Activated CD4-positive, alpha-beta T cell treated with anti-CD3 and anti-CD28 coated beads for 36 hours (primary cell): ENCODE measurements at regions of chr1 and their contacts with region 1.

Region 1: GRCh38 chr1:198657550-198658064 is 18.8 kb downstream of the PTPRC start:
- DNase-seq: peak; percentile 55
- ATAC-seq: peak; percentile 48
- H3K4me3 Mint-ChIP-seq: peak overlapping the region; percentile 76
- H3K27ac Mint-ChIP-seq: peak overlapping the region; percentile 94
- H3K4me1 Mint-ChIP-seq: peaks cover 64% of the 10 kb centered on the region
- H3K27me3 Mint-ChIP-seq: no peaks in the 10 kb centered on the region

Region 2: DNA sequence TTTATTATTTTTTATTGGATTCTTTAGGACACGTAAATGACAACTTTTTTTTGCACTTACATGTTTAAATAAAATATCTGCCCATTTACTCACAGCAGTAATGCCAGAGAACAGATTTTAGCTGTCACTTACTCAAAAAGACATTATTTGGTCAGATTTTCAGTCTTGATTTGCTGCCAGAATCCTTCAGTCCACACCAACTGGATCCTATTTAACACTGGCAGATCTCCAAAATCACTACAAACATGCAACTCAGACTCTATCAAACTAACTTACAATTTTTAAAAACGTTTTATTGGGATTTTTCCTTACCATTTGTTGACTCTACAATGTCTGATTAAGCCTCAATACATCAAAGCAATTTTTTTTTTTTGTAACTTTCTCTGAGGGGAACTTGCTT is 128.2 kb before region 1 on chr1:
- CTCF ChIA-PET with region 1: no interaction called
- POLR2A ChIA-PET with region 1: interaction called, 15 read pairs
- intact Hi-C with region 1: no loop called
- DNase-seq: no peak
- ATAC-seq: no peak
- H3K4me3 Mint-ChIP-seq: no peak overlapping the region
- H3K27ac Mint-ChIP-seq: no peak overlapping the region
- H3K4me1 Mint-ChIP-seq: peaks cover 71% of the 10 kb centered on the region
- H3K27me3 Mint-ChIP-seq: no peaks in the 10 kb centered on the region

Region 3: DNA sequence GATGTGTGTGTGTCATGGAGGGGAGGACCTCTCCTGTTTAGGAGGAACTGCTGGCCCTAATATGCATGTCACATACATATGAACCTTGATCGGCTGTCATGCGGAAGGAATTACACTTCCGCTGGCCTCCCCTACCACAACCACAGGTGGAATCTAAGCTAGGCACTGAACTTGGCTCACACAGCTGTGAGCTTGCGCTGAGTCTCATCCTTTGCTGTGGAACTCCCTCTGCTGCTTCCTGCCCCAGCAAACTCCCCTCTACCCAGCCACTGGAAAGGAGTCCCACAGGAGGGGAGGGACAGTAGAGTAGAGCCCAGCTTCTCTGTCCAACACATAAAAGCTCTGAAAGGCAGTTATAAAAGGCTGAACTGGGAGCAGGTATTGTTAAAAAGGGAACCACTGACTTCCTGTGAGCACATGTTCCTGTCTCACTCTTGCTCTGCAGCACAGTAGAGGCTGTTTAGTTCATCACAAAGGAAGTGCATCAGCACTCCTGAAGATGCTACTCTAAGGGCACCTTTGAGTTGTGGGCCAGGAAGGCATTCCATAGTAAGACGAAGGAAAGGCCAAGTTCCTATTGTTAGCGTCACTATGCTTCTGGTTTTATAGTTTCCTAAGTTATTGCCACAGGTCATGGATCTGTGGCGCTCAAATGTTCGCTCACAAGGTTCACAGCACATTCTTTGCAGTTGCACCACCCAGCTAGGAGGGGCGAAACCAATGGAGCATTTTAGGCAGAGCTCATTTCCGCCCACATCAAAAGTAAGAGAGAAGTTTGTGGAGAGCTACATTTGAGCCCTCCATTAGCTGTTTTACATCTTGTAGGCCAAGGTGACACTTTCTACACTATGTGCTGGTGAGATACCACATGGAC is 36.4 kb before region 1 on chr1:
- CTCF ChIA-PET with region 1: interaction called, 9 read pairs
- POLR2A ChIA-PET with region 1: interaction called, 5 read pairs
- intact Hi-C with region 1: loop called (anchors 1 to 5 kb)
- DNase-seq: peak; percentile 84
- ATAC-seq: peak; percentile 77
- H3K4me3 Mint-ChIP-seq: peak overlapping the region; percentile 76
- H3K27ac Mint-ChIP-seq: peak overlapping the region; percentile 100
- H3K4me1 Mint-ChIP-seq: peaks cover 94% of the 10 kb centered on the region
- H3K27me3 Mint-ChIP-seq: no peaks in the 10 kb centered on the region

Region 4: DNA sequence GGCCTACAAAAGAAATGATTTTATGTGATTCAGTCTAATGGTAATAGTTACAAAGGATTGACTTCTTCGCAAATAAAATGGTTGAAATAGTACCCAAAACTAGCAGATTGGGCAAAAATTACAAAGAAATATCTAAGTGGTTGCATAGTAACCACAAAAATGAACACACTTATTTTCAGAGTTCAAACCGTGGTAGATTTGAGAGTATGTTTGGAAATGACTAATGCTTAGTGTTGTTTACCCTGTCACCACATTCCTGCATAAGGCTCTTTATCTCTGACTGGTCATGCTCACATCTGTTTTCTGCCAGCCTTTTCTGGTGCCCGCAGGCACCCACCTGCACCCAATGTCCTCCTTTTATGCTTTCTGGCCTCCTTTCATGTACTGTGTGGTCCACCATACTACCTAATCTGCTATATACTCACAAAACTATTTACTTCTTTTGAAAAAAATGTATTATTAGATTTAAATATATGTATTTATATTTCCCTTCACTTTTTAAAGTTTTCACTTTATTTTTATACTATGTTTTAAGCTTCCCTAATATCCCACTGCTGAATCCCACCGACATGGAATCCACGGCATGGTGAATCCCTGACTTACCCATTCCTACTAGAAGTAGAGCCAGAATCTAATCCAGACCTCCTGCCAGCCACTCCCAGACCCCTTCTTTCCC is 11.6 kb after region 1 on chr1:
- CTCF ChIA-PET with region 1: interaction called, 3 read pairs
- POLR2A ChIA-PET with region 1: interaction called, 5 read pairs
- intact Hi-C with region 1: loop called in 1 of 2 experiments (anchors 1 kb)
- DNase-seq: peak; percentile 57
- ATAC-seq: peak; percentile 85
- H3K4me3 Mint-ChIP-seq: peak overlapping the region; percentile 34
- H3K27ac Mint-ChIP-seq: peak overlapping the region; percentile 77
- H3K4me1 Mint-ChIP-seq: peaks cover 90% of the 10 kb centered on the region
- H3K27me3 Mint-ChIP-seq: no peaks in the 10 kb centered on the region

Region 5: DNA sequence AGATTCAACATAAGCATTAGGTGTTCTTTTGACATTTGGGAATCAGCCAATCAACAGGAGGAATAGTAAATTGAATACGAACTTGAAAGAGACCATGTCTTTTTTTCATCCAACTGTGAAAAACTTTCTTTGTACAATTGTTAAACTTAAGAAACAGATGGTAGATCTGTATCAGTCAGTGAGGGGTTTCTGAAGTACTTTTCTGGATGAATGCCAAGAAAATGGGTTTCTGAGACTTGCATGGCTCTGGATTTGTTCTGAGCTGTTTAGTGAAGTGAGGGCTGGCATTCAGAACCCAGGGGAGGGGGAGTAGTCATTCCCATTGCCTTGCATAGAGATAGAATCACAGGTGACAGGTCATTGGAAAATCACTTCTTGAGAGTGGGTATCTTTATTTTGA is 18.6 kb after region 1 on chr1:
- CTCF ChIA-PET with region 1: interaction called, 17 read pairs
- POLR2A ChIA-PET with region 1: interaction called, 16 read pairs
- intact Hi-C with region 1: loop called (anchors 1 kb)
- DNase-seq: peak; percentile 36
- ATAC-seq: peak; percentile 35
- H3K4me3 Mint-ChIP-seq: peak overlapping the region; percentile 73
- H3K27ac Mint-ChIP-seq: peak overlapping the region; percentile 98
- H3K4me1 Mint-ChIP-seq: peaks cover 91% of the 10 kb centered on the region
- H3K27me3 Mint-ChIP-seq: no peaks in the 10 kb centered on the region

Region 6: DNA sequence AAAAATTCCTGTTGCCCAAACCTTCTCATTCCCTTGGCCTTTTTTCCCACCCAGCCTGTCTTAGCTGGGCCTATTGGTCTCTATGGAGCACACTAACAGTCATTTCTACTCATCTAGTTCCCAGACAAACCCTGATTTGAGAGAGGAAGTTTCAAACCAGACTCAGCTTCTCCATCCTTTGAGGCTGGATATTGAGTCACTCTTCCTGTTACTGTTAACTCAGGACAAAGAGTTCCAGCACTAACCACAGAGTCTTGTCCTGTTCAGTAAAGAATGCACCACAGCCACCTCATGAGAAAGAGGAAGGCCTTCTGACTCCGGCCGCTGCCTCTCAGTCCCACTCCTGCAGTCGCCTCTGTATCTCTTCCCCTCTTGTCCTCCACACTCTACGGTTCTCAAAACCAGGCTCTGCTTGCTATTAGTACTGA is 119.0 kb after region 1 on chr1:
- CTCF ChIA-PET with region 1: no interaction called
- POLR2A ChIA-PET with region 1: no interaction called
- intact Hi-C with region 1: no loop called
- DNase-seq: no peak
- ATAC-seq: peak; percentile 26
- H3K4me3 Mint-ChIP-seq: no peak overlapping the region
- H3K27ac Mint-ChIP-seq: no peak overlapping the region
- H3K4me1 Mint-ChIP-seq: peaks cover 8% of the 10 kb centered on the region
- H3K27me3 Mint-ChIP-seq: no peaks in the 10 kb centered on the region